ENCODE measurements at regions of chr2 and their contacts with region 1.

Region 1: GRCh38 chr2:222504719-222505118 is 80.4 kb downstream of the SGPP2 start:
- DNase-seq: no peak

Region 2: DNA sequence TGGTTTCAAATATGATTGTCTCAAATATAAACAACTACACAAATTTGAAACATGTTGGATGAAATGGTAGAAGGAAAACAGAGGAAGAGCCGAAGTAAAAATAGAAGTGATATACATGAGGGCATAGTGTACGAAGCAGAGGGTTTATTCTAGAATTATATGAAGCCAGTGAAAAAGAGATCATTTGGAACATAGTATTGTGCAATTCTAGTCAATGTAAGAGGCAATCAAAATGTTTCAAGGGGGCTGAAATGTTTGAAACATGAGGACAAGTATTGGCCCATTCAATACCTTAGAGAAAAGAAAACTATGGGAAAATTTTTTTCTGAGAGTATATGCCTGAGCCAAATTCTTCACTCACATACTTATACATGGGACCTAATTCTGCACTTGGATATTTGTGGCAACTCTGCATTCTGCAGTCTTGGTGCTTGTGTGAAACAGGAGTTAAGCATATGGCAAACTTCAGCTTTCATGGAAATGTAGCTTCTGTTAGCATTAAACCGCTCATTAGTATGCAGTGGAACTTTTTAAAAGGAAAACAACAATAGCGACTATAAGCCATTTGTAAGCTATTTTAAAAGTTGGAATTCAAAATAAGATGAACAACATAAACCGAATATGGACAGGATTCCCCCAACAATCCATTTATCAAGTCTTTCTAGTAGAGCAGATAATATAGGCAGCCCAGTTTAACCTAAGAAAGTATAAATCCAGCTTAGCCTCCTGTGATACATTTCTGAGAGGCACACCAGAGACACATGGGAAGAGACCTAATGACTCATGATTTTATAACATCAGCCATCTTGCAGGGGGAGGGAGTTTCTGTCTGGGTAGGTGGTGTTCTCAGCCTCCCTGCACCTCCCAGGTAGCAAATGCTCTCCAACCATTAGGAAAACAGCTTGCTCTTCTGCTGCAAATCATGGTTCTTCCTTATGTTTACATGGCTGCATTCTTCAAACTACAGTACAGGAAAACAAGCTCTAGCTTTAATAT is 403.7 kb before region 1 on chr2:
- CTCF ChIA-PET with region 1: interaction called, 13 read pairs
- POLR2A ChIA-PET with region 1: no interaction called
- DNase-seq: no peak

Region 3: GRCh38 chr2:222483513-222484039 is 21.1 kb before region 1 on chr2:
- CTCF ChIA-PET with region 1: no interaction called
- POLR2A ChIA-PET with region 1: no interaction called
- DNase-seq: no peak